Activated CD4-positive, alpha-beta T cell treated with anti-CD3 and anti-CD28 coated beads, Interleukin-2, amount 10 ng/mL, durations not matched to agents 24 days and 14 days (primary cell): ENCODE measurements at regions of chr9 and their contacts with region 1.

Region 1: GRCh38 chr9:34701769-34702736 is 7.9 kb downstream of the CCL21 start:
- DNase-seq: peak; percentile 94
- H3K4me3 Mint-ChIP-seq: peak overlapping the region; percentile 77
- H3K27ac Mint-ChIP-seq: no peak overlapping the region
- H3K4me1 Mint-ChIP-seq: peaks cover 9% of the 10 kb centered on the region
- H3K27me3 Mint-ChIP-seq: peaks cover 24% of the 10 kb centered on the region

Region 2: DNA sequence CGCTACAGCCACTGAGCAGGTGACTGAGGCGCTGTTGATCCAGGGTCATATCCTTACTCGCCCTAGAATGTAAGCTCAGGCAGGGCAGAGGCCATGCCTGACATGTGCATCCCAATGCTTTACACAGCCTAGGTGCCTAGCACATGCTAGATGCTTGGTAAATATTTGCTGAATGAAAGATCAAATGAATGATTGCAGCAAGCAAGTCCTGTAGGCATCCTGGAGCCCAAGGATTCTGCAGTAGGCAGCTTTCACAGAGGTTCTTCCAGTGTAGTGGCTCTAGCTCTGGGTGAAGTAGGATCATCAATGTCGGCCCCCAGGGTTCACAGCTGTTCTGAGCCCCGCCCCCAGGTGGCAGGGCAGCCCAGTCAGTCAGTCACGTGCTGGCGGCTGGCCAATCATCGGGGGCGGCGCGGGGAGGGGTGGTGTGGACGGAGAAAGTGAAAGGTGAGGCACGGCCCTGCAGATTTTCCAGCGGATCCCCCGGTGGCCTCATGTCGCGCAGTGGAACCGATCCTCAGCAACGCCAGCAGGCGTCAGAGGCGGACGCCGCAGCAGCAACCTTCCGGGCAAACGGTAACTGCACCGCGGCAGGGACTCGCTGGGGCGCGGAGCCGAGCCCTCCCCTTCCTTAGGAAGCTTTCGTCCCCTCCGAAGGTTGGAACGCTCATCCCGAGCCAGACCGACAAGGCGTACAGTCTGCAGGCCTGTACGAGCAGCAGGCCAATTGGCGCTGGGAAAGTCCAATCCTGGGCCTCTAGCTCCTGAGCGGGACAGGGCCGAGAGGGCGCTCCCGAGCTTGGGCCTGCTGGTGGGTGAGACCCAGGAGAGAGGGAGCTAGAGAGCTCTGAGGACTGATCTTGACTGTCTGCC is 55.6 kb before region 1 on chr9 and contains the start of gene GALT:
- intact Hi-C with region 1: loop called (anchors 1 kb)
- DNase-seq: peak; percentile 99
- H3K4me3 Mint-ChIP-seq: peak within 1 kb of the TSS; percentile 94
- H3K27ac Mint-ChIP-seq: peak within 1 kb of the TSS; percentile 92
- H3K4me1 Mint-ChIP-seq: peaks cover 28% of the 10 kb centered on the region
- H3K27me3 Mint-ChIP-seq: no peaks in the 10 kb centered on the region
- total RNA-seq, gene GALT: 68.9 and 73.4 TPM in 2 replicates

Region 3: DNA sequence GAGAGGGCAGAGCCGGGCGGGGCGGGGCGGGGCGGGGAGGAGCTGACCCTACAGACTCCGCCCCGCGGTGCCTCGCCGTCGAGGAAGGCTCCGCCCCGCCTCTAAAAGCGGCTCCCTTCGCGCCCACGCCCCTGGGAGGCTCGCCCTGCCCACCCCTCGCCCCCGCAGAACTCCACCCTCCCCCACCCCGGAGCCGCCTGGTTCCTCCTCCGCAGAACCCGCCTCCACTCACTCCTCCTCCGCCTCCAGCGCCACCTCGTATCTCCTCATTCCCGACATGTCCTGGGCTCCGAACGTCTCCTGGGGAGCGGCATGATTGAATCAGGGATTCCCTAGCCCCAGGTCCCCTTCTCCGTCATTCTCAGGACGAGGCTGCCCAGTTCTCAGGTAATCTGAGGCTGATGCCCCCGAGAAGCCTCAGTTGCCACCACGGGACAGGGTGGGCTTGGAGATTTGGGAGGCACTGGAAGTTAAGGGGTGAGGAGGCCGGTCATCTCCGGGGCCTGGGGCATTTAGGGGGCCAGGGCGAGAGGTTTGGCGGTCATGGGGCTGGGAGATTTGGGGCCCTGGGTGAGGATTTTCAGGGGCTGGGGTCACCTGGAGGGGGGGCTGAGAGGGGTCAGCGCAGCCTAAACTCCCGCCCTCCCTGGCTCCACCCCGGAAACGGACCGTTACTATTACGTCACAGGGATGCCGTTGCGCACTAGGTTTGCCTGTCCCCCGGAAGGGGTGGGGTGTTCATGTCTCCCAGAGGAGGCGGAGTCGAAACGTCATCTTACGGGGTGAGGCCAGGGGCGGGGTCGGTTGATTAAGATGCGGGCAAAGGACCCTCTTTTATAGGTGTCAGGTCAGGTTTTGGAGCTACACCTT is 36.4 kb before region 1 on chr9:
- intact Hi-C with region 1: loop called (anchors 1 kb)
- DNase-seq: peak; percentile 97
- H3K4me3 Mint-ChIP-seq: peak overlapping the region; percentile 91
- H3K27ac Mint-ChIP-seq: peak overlapping the region; percentile 90
- H3K4me1 Mint-ChIP-seq: peaks cover 45% of the 10 kb centered on the region
- H3K27me3 Mint-ChIP-seq: no peaks in the 10 kb centered on the region

Region 4: GRCh38 chr9:34675048-34675714 is 26.9 kb before region 1 on chr9:
- intact Hi-C with region 1: loop called (anchors 1 kb)
- DNase-seq: peak; percentile 83
- H3K4me3 Mint-ChIP-seq: no peak overlapping the region
- H3K27ac Mint-ChIP-seq: no peak overlapping the region
- H3K4me1 Mint-ChIP-seq: peaks cover 2% of the 10 kb centered on the region
- H3K27me3 Mint-ChIP-seq: no peaks in the 10 kb centered on the region

Region 5: DNA sequence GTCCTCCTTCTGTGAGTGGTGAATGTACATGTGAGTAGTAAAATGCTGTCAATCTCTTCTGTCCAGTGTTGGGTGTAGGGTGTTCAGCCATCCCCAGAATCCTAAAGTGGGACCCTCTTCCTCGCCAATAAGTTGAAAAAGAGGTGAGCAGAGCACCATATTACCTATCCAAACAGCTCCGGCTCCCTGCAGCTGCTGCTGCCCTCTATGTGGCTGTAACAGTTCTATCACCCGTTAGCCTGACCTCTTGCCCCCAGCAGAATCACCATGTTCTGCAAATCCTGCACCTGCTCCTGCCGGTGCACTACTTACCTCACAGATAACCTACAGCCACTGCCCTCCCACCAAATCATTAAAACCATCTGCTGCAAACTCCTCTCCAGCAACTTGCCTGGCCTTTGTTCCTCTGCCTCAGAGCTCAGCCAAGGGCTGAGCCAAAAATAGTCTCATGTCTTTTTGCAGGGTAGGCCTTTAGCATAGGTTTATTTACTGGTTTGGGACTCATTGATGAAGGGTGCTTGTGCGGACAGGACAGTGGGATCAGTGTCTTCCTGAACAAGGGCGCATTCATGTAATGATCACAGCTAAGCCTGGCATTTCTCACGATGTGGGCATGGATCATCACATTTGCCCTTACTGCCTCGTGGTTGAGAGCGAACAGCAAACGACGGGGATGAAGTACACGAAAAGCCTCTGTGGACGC is 57.5 kb after region 1 on chr9:
- intact Hi-C with region 1: no loop called
- DNase-seq: no peak
- H3K4me3 Mint-ChIP-seq: no peak overlapping the region
- H3K27ac Mint-ChIP-seq: no peak overlapping the region
- H3K4me1 Mint-ChIP-seq: peaks cover 4% of the 10 kb centered on the region
- H3K27me3 Mint-ChIP-seq: peaks cover 39% of the 10 kb centered on the region

Region 6: DNA sequence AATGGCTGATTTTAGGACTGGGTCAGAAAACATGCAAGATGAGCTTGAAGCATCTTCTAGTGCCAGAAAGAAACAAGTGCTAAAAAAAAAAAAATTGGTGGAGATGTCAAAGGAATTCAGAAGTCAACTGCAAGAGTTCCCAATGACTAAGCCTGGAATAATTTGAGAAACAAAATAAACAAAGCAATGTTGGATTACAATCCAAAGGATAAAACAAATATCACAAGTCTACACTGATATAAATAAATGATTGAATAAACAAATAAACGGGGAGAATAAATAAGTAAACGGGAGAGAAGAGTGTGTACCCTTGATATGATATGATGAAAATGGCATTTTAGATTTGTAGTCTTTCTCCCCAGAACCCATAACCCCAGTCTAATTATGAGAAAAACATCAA is 71.3 kb after region 1 on chr9:
- intact Hi-C with region 1: no loop called
- DNase-seq: no peak
- H3K4me3 Mint-ChIP-seq: no peak overlapping the region
- H3K27ac Mint-ChIP-seq: no peak overlapping the region
- H3K4me1 Mint-ChIP-seq: peaks cover 3% of the 10 kb centered on the region
- H3K27me3 Mint-ChIP-seq: peaks cover 12% of the 10 kb centered on the region